HepG2 (cell line): ENCODE measurements at regions of chr16 and their contacts with region 1.

Region 1: GRCh38 chr16:19389246-19389645 is 28.4 kb upstream of the TMC5 start:
- DNase-seq: peak; percentile 74
- ATAC-seq: peak; percentile 99
- H3K4me3 ChIP-seq: no peak overlapping the region
- H3K27ac ChIP-seq: no peak overlapping the region
- H3K4me1 ChIP-seq: no peaks in the 10 kb centered on the region
- H3K27me3 ChIP-seq: peaks cover 0 to 4% of the 10 kb centered on the region in 2 experiments; a peak in 1 of 5 replicates
- CTCF ChIP-seq: peak; percentile 96
- EP300 ChIP-seq: no peak
- POLR2A ChIP-seq: no peak
- RAD21 ChIP-seq: peak; percentile 88

Region 2: GRCh38 chr16:19366391-19366790 is 22.9 kb before region 1 on chr16:
- CTCF ChIA-PET with region 1: no interaction called
- POLR2A ChIA-PET with region 1: no interaction called
- in situ Hi-C with region 1: no loop called
- intact Hi-C with region 1: no loop called
- DNase-seq: no peak
- ATAC-seq: no peak
- H3K4me3 ChIP-seq: no peak overlapping the region
- H3K27ac ChIP-seq: no peak overlapping the region
- H3K4me1 ChIP-seq: no peaks in the 10 kb centered on the region
- H3K27me3 ChIP-seq: peaks cover 0 to 13% of the 10 kb centered on the region in 2 experiments; a peak in 2 of 5 replicates
- CTCF ChIP-seq: no peak
- EP300 ChIP-seq: no peak
- POLR2A ChIP-seq: no peak
- RAD21 ChIP-seq: no peak

Region 3: GRCh38 chr16:19437280-19437679 is 48.0 kb after region 1 on chr16:
- CTCF ChIA-PET with region 1: no interaction called
- POLR2A ChIA-PET with region 1: no interaction called
- in situ Hi-C with region 1: no loop called
- intact Hi-C with region 1: no loop called
- DNase-seq: no peak
- ATAC-seq: no peak
- H3K4me3 ChIP-seq: no peak overlapping the region
- H3K27ac ChIP-seq: no peak overlapping the region
- H3K4me1 ChIP-seq: peaks cover 4% of the 10 kb centered on the region
- H3K27me3 ChIP-seq: peaks cover 0 to 2% of the 10 kb centered on the region in 2 experiments; a peak in 1 of 5 replicates
- CTCF ChIP-seq: no peak
- EP300 ChIP-seq: no peak
- POLR2A ChIP-seq: no peak
- RAD21 ChIP-seq: no peak

Region 4: GRCh38 chr16:19458718-19459379 is 69.6 kb after region 1 on chr16:
- CTCF ChIA-PET with region 1: interaction called, 5 read pairs
- POLR2A ChIA-PET with region 1: no interaction called
- in situ Hi-C with region 1: no loop called
- intact Hi-C with region 1: loop called (anchors 1 kb)
- DNase-seq: no peak
- ATAC-seq: peak; percentile 90
- H3K4me3 ChIP-seq: peak overlapping the region in 2 of 3 experiments; percentile 26 to 39; a peak in 4 of 6 replicates
- H3K27ac ChIP-seq: no peak overlapping the region
- H3K4me1 ChIP-seq: peaks cover 10% of the 10 kb centered on the region
- H3K27me3 ChIP-seq: peaks cover 4 to 22% of the 10 kb centered on the region in 2 experiments; a peak in 2 of 5 replicates
- CTCF ChIP-seq: peak; percentile 67
- EP300 ChIP-seq: no peak
- POLR2A ChIP-seq: no peak
- RAD21 ChIP-seq: no peak

Region 5: DNA sequence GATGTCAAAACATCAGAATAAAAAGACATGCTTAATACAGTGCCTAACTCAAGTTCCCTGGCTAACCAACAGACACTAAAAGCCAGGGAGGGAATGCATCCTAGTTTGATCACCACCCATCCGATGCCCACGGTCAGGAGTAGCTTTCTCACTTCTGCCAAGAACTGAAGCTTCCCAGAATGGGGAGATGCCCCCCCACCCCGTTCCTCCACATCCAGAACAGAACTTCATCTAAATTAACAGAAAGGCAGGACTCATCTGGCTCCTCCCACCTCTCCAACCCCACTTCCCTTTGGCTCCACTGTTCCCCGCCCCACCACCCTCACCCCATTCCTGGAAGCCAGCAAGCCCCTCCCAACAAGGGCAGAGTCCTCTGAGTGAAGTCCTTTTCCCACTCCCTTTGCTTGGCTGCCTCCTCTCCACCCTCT is 99.0 kb after region 1 on chr16:
- CTCF ChIA-PET with region 1: interaction called, 6 read pairs
- POLR2A ChIA-PET with region 1: no interaction called
- in situ Hi-C with region 1: no loop called
- intact Hi-C with region 1: loop called (anchors 5 kb)
- DNase-seq: no peak
- ATAC-seq: peak; percentile 68
- H3K4me3 ChIP-seq: peak overlapping the region in 1 of 3 experiments; percentile 25; a peak in 1 of 6 replicates
- H3K27ac ChIP-seq: no peak overlapping the region
- H3K4me1 ChIP-seq: peaks cover 14% of the 10 kb centered on the region
- H3K27me3 ChIP-seq: peaks cover 0 to 9% of the 10 kb centered on the region in 2 experiments; a peak in 1 of 5 replicates
- CTCF ChIP-seq: no peak
- EP300 ChIP-seq: no peak
- POLR2A ChIP-seq: no peak
- RAD21 ChIP-seq: no peak